CD4-positive, alpha-beta memory T cell (primary cell): ENCODE measurements at regions of chr17 and their contacts with region 1.

Region 1: GRCh38 chr17:67210915-67211314 is 34.1 kb downstream of the HELZ start:
- DNase-seq: no peak
- H3K4me3 ChIP-seq: no peak overlapping the region
- H3K4me3 Mint-ChIP-seq: no peak overlapping the region
- H3K27ac ChIP-seq: no peak overlapping the region
- H3K27ac Mint-ChIP-seq: peak overlapping the region in 1 of 7 donors; percentile 32
- H3K4me1 ChIP-seq: peaks cover 6% of the 10 kb centered on the region
- H3K4me1 Mint-ChIP-seq: peaks cover 17 to 50% (median 40%) of the 10 kb centered on the region in 4 donors
- H3K27me3 ChIP-seq: no peaks in the 10 kb centered on the region
- H3K27me3 Mint-ChIP-seq: no peaks in the 10 kb centered on the region

Region 2: GRCh38 chr17:67221062-67221998 is 10.4 kb after region 1 on chr17:
- CTCF ChIA-PET with region 1: interaction called, 10 read pairs
- POLR2A ChIA-PET with region 1: no interaction called
- intact Hi-C with region 1: no loop called
- DNase-seq: peak; percentile 33 to 58 (median 50)
- H3K4me3 ChIP-seq: no peak overlapping the region
- H3K4me3 Mint-ChIP-seq: peak overlapping the region in 1 of 8 donors; percentile 43
- H3K27ac ChIP-seq: no peak overlapping the region
- H3K27ac Mint-ChIP-seq: peak overlapping the region in 4 of 7 donors; percentile 3 to 77 (median 50)
- H3K4me1 ChIP-seq: peaks cover 16% of the 10 kb centered on the region
- H3K4me1 Mint-ChIP-seq: peaks cover 37 to 60% (median 49%) of the 10 kb centered on the region in 4 donors
- H3K27me3 ChIP-seq: no peaks in the 10 kb centered on the region
- H3K27me3 Mint-ChIP-seq: no peaks in the 10 kb centered on the region

Region 3: DNA sequence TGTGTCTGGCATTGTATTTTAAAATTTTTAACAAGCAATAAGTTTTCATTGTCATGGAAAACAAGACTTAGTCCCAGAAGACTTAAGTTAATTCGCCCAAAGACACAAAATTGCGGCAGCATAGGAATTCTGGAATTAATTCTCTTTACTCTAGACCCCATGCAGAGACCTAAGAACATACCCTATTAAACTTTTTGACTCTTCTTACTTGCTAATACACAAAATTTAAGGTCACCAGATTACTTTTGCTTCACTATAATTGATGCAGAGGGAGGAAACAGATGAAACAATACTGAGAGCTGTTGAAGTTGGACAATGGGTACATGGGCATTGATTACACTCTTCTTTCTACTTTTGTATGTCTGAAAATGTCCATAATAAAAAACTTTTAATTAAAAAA is 21.5 kb after region 1 on chr17:
- CTCF ChIA-PET with region 1: no interaction called
- POLR2A ChIA-PET with region 1: no interaction called
- intact Hi-C with region 1: no loop called
- DNase-seq: no peak
- H3K4me3 ChIP-seq: no peak overlapping the region
- H3K4me3 Mint-ChIP-seq: no peak overlapping the region
- H3K27ac ChIP-seq: no peak overlapping the region
- H3K27ac Mint-ChIP-seq: no peak overlapping the region
- H3K4me1 ChIP-seq: peaks cover 20% of the 10 kb centered on the region
- H3K4me1 Mint-ChIP-seq: peaks cover 31 to 60% (median 44%) of the 10 kb centered on the region in 4 donors
- H3K27me3 ChIP-seq: no peaks in the 10 kb centered on the region
- H3K27me3 Mint-ChIP-seq: no peaks in the 10 kb centered on the region

Region 4: DNA sequence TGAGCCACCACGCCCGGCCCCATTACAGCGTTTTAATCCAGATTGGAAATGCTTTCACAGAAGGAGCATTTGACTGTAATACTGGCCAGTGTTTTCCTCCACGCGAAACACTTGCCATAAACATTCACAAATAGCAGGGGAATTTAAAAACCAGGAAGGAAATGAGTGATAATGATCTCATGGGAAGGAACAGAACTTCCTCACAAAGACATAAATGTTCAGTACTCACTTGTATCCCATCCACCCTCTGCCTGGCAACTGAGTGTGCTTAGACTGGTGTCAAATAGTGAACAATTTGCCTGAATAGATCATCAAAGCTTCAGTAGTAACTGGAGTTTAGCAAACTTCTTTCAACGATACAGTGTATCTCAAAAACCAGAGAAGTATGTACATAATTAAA is 101.3 kb after region 1 on chr17:
- CTCF ChIA-PET with region 1: no interaction called
- POLR2A ChIA-PET with region 1: no interaction called
- intact Hi-C with region 1: no loop called
- DNase-seq: no peak
- H3K4me3 ChIP-seq: no peak overlapping the region
- H3K4me3 Mint-ChIP-seq: no peak overlapping the region
- H3K27ac ChIP-seq: no peak overlapping the region
- H3K27ac Mint-ChIP-seq: no peak overlapping the region
- H3K4me1 ChIP-seq: no peaks in the 10 kb centered on the region
- H3K4me1 Mint-ChIP-seq: no peaks in the 10 kb centered on the region
- H3K27me3 ChIP-seq: no peaks in the 10 kb centered on the region
- H3K27me3 Mint-ChIP-seq: no peaks in the 10 kb centered on the region